Aorta (tissue), 5 donors: ENCODE measurements at regions of chr18 and their contacts with region 1.

Region 1: GRCh38 chr18:158128-159036 is at the start of gene USP14:
- DNase-seq: peak; percentile 98 to 99
- ATAC-seq: peak; percentile 97
- H3K4me3 ChIP-seq: peak within 1 kb of the TSS; percentile 67 to 84
- H3K27ac ChIP-seq: peak within 1 kb of the TSS in 1 of 2 donors; percentile 47
- H3K4me1 ChIP-seq: no peaks in the 10 kb centered on the region
- H3K27me3 ChIP-seq: no peaks in the 10 kb centered on the region
- total RNA-seq, gene USP14: 45.8 to 49.4 TPM

Region 2: GRCh38 chr18:111292-112014 is 46.9 kb before region 1 on chr18:
- intact Hi-C with region 1: loop called in 1 of 2 experiments (anchors 2 kb)
- DNase-seq: peak; percentile 78 to 92
- ATAC-seq: no peak
- H3K4me3 ChIP-seq: no peak overlapping the region
- H3K27ac ChIP-seq: no peak overlapping the region
- H3K4me1 ChIP-seq: no peaks in the 10 kb centered on the region
- H3K27me3 ChIP-seq: no peaks in the 10 kb centered on the region

Region 3: GRCh38 chr18:212780-213179 is 54.4 kb after region 1 on chr18:
- intact Hi-C with region 1: no loop called
- DNase-seq: no peak
- ATAC-seq: no peak
- H3K4me3 ChIP-seq: no peak overlapping the region
- H3K27ac ChIP-seq: no peak overlapping the region
- H3K4me1 ChIP-seq: no peaks in the 10 kb centered on the region
- H3K27me3 ChIP-seq: no peaks in the 10 kb centered on the region

Region 4: DNA sequence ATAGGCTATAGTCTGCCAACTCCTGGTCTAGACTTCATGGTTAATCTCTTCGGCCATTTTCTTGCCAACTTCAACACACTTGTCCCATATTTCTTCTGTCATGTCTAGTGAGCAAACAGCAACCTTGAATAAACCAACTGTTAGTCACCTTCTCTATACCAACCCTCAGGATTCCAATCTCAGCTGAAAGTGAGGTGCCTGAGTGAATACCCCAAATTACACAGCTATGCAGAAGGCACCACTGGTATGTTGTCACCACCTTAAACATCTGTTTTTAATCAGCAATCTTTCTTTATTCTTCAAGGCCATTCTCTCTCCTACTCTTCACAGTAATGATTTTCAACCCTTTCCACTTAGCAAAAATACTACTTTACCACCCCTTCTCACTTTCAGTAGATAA is 70.2 kb after region 1 on chr18:
- intact Hi-C with region 1: no loop called
- DNase-seq: no peak
- ATAC-seq: no peak
- H3K4me3 ChIP-seq: no peak overlapping the region
- H3K27ac ChIP-seq: no peak overlapping the region
- H3K4me1 ChIP-seq: no peaks in the 10 kb centered on the region
- H3K27me3 ChIP-seq: no peaks in the 10 kb centered on the region